Aorta (tissue), 5 donors: ENCODE measurements at regions of chr7 and their contacts with region 1.

Region 1: GRCh38 chr7:77684030-77684429 is 12.2 kb upstream of the RSBN1L start:
- DNase-seq: no peak
- ATAC-seq: no peak
- H3K4me3 ChIP-seq: no peak overlapping the region
- H3K27ac ChIP-seq: no peak overlapping the region
- H3K4me1 ChIP-seq: peaks cover 0 to 4% of the 10 kb centered on the region in 2 donors
- H3K27me3 ChIP-seq: no peaks in the 10 kb centered on the region

Region 2: GRCh38 chr7:77727936-77728701 is 44.1 kb after region 1 on chr7:
- intact Hi-C with region 1: loop called in 1 of 2 experiments (anchors 2 kb)
- DNase-seq: no peak
- ATAC-seq: no peak
- H3K4me3 ChIP-seq: no peak overlapping the region
- H3K27ac ChIP-seq: no peak overlapping the region
- H3K4me1 ChIP-seq: peaks cover 2 to 10% of the 10 kb centered on the region in 2 donors
- H3K27me3 ChIP-seq: no peaks in the 10 kb centered on the region

Region 3: GRCh38 chr7:77887567-77887966 is 203.5 kb after region 1 on chr7:
- intact Hi-C with region 1: no loop called
- DNase-seq: no peak
- ATAC-seq: peak; percentile 65
- H3K4me3 ChIP-seq: no peak overlapping the region
- H3K27ac ChIP-seq: no peak overlapping the region
- H3K4me1 ChIP-seq: peaks cover 1 to 4% of the 10 kb centered on the region in 2 donors
- H3K27me3 ChIP-seq: no peaks in the 10 kb centered on the region